Activated B cell treated with CpG ODN at 0.5 μM for 24 hours (primary cell): ENCODE measurements at regions of chr1 and their contacts with region 1.

Region 1: GRCh38 chr1:188846468-188846867 is 1631.2 kb downstream of the BRINP3 start:
- DNase-seq: no peak
- ATAC-seq: no peak
- H3K4me3 Mint-ChIP-seq: no peak overlapping the region
- H3K27ac Mint-ChIP-seq: no peak overlapping the region
- H3K4me1 Mint-ChIP-seq: no peaks in the 10 kb centered on the region
- H3K27me3 Mint-ChIP-seq: no peaks in the 10 kb centered on the region
- CTCF ChIP-seq: no peak

Region 2: DNA sequence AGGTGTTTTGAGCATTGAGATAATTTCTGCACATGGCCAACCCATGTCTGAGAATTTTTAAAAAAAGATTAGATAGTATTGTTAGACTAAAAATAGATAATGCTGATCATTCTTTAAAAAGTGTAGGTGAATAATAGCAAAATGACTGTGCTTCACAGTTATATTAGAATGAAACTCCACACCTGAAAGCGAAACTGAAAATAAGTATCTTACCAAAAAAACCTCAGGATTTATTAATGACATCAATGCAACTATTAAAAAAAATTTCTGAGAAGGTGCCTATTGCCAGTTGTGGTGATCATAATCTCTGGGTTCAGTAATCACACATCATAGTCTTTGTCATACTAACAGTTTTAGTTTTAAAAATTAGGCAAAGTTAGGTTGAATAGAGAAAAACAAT is 1981.2 kb before region 1 on chr1:
- CTCF ChIA-PET with region 1: no interaction called
- POLR2A ChIA-PET with region 1: no interaction called
- intact Hi-C with region 1: loop called (anchors 5 kb)
- DNase-seq: no peak
- ATAC-seq: no peak
- H3K4me3 Mint-ChIP-seq: no peak overlapping the region
- H3K27ac Mint-ChIP-seq: no peak overlapping the region
- H3K4me1 Mint-ChIP-seq: peaks cover 2% of the 10 kb centered on the region
- H3K27me3 Mint-ChIP-seq: no peaks in the 10 kb centered on the region
- CTCF ChIP-seq: no peak

Region 3: DNA sequence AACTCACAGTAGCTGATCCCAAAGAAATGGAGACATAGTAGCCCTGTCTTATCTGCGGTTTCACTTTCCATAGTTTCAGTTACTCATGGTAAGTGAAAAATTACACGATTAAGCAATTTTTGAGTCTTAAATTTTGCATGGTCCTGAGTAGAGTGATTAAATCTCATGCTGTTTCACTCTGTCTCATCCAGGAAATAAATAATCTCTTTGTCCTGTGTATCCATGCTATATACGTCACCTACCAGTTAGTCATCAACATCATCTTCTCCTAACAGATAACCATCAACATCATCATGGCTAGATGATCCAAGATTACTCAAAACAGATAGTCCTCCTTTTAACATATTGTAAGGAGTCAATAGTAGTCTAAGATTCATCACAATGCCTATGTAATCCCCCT is 41.9 kb after region 1 on chr1:
- CTCF ChIA-PET with region 1: no interaction called
- POLR2A ChIA-PET with region 1: no interaction called
- intact Hi-C with region 1: no loop called
- DNase-seq: no peak
- ATAC-seq: no peak
- H3K4me3 Mint-ChIP-seq: no peak overlapping the region
- H3K27ac Mint-ChIP-seq: no peak overlapping the region
- H3K4me1 Mint-ChIP-seq: no peaks in the 10 kb centered on the region
- H3K27me3 Mint-ChIP-seq: no peaks in the 10 kb centered on the region
- CTCF ChIP-seq: no peak